PC-3 (cell line): ENCODE measurements at regions of chr13 and their contacts with region 1.

Region 1: GRCh38 chr13:39263033-39263432 is 224.8 kb downstream of the NHLRC3 start:
- DNase-seq: peak; percentile 65
- ATAC-seq: peak; percentile 80
- H3K4me3 ChIP-seq: no peak overlapping the region
- H3K27ac ChIP-seq: no peak overlapping the region
- H3K4me1 ChIP-seq: peaks cover 8% of the 10 kb centered on the region
- H3K27me3 ChIP-seq: no peaks in the 10 kb centered on the region
- CTCF ChIP-seq: peak; percentile 69

Region 2: DNA sequence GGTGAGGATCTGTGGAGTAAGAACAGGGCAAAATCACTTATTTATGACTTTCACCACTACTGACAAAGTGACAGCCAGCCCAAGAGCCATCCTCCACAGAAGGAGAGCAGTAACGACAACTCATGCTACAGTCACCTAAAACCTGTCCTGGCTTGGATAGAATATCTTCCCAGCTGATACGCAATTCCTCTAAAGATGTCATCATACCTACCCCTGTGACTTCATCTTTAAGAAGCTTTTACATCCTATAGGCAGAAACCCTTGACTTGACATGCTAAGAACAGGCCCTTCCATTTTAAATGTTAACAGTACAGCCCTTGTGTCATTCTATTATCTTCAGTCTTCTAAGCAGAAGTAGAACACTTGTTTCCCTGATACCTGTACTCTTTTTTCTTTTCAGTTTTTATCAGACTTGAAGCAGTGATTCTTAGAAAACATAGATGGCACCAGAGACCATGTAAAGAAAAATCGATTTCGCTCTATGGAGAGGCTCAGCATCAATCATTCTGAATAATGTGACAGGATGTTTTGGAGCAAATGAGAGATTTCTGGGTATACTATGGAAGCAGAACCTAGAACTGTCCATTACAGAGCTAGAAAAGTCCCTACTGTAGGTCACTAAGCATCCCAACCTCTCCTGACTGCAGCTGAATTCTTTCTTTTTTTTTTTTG is 292.5 kb before region 1 on chr13:
- CTCF ChIA-PET with region 1: no interaction called
- POLR2A ChIA-PET with region 1: no interaction called
- intact Hi-C with region 1: loop called (anchors 5 kb)
- DNase-seq: no peak
- ATAC-seq: no peak
- H3K4me3 ChIP-seq: no peak overlapping the region
- H3K27ac ChIP-seq: no peak overlapping the region
- H3K4me1 ChIP-seq: no peaks in the 10 kb centered on the region
- H3K27me3 ChIP-seq: peaks cover 58% of the 10 kb centered on the region
- CTCF ChIP-seq: 0 out of 2 replicates have a peak, but pooled peaks have one; percentile 26

Region 3: GRCh38 chr13:39051157-39051556 is 211.9 kb before region 1 on chr13:
- CTCF ChIA-PET with region 1: no interaction called
- POLR2A ChIA-PET with region 1: no interaction called
- intact Hi-C with region 1: loop called (anchors 1 kb)
- DNase-seq: peak; percentile 52
- ATAC-seq: no peak
- H3K4me3 ChIP-seq: no peak overlapping the region
- H3K27ac ChIP-seq: no peak overlapping the region
- H3K4me1 ChIP-seq: no peaks in the 10 kb centered on the region
- H3K27me3 ChIP-seq: no peaks in the 10 kb centered on the region
- CTCF ChIP-seq: peak; percentile 61